Left cardiac atrium (tissue), 4 donors: ENCODE measurements at regions of chr9 and their contacts with region 1.

Region 1: DNA sequence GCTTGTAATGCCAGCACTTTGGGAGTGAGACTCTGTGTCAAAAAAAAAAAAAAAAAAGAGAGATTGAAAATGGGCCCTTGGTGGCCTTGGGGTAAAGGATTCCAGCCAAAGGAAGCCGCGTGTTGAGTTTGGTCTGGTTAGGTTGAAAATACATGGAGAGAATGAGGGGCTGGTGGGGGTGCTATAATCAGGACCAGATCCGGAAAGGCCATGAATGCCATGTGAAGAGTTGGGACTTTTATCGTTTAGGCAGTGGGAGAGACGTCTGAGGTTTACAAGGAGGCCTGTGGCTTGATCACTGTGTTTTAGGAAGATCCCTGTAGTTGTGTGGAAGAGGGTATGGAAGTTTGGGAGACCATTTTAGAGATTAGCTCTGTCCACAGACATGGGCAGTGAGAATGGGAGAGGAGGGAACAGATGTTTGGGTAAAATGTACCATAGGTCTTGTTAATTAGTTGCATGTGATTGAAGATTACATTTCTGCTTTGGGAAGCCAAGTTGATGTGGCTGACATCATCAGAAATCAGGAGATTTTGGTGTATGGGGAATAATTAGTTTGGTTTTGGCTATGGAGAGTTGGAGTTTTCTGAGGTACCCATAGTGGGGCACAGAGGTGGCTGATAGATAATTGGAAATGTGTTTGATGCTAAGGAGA is 3.5 kb downstream of the MSANTD3 start:
- DNase-seq: no peak
- ATAC-seq: no peak

Region 2: GRCh38 chr9:100352727-100353505 is 77.5 kb before region 1 on chr9 and contains the start of gene TEX10:
- intact Hi-C with region 1: loop called in 1 of 2 experiments (anchors 5 kb)
- DNase-seq: peak; percentile 92
- ATAC-seq: peak; percentile 98 to 99
- total RNA-seq, gene TEX10: 7.9 to 11.6 TPM